Endothelial cell of umbilical vein (primary cell): ENCODE measurements at regions of chr3 and their contacts with region 1.

Region 1: DNA sequence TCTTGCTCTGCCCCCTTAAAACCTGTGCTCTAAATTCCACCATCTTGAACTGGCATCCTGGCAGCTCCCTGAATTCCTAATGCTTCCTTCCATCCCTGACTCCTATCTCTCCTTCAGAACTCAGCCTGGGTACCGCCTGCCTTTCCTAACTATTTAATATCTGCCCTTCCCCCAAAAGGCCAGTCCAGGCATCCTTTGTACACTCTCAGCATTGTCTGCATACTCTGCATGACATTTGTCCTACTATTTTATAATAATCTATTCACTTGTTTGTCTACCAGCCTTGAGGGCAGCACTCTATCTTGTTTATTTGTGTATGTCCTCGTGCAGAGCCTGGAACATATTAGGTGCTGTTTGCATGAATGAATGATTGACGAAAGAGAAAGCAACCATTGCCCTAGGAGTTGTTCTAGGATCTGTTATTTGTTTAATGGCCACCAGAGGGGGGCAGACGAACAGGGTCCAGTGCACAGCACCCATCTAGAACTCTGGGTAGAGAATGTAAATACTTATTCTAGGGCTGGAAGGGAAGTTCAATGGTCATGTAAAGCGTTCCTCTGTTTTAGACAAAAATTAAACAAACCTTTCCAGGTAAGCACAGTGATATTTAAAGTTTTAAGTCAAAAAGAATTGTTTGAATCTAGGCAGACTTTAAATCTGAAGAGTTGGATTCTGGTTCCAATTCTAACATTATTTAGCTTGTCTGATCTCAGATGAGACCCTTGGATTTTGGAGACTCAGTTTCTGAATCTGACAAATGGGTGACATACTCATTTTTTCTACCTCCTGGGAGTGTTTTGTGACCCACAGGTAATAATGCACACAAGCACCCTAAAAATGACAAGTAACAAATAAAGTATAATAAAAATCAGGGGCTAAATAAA is 125.8 kb upstream of the GALNT15 start:
- DNase-seq: peak; percentile 75
- H3K4me3 ChIP-seq: peak overlapping the region in 1 of 3 experiments; percentile 35
- H3K27ac ChIP-seq: no peak overlapping the region
- H3K4me1 ChIP-seq: peaks cover 18% of the 10 kb centered on the region
- H3K27me3 ChIP-seq: no peaks in the 10 kb centered on the region
- CTCF ChIP-seq: peak; percentile 60 to 67
- POLR2A ChIP-seq: no peak

Region 2: GRCh38 chr3:15205934-15206661 is 842.6 kb before region 1 on chr3 and contains the start of gene CAPN7:
- CTCF ChIA-PET with region 1: no interaction called
- POLR2A ChIA-PET with region 1: no interaction called
- dilution Hi-C with region 1: no loop called
- intact Hi-C with region 1: loop called (anchors 5 kb)
- DNase-seq: peak; percentile 98
- H3K4me3 ChIP-seq: peak within 1 kb of the TSS; percentile 69 to 94 (median 87)
- H3K27ac ChIP-seq: peak within 1 kb of the TSS; percentile 66
- H3K4me1 ChIP-seq: peaks cover 6% of the 10 kb centered on the region
- H3K27me3 ChIP-seq: no peaks in the 10 kb centered on the region
- CTCF ChIP-seq: peak; percentile 31 to 50
- POLR2A ChIP-seq: peak; percentile 86
- total RNA-seq, gene CAPN7: 28.8 and 32.7 TPM in 2 replicates

Region 3: DNA sequence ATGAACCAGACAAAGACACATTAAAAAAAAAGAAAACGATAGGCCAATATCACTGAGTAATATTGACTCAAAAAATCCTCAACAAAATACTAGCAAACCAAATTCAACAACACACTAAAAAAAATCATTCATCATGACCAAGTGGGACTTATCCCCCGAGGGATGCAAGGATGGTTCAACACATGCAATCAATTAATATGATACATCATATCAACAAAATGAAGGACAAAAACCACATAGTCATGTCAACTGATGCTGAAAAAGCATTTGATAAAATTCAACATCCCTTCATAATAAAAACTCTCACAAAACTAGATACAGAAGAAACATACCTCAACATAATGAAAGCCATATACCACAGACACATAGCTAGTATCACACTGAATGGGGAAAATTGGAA is 209.1 kb before region 1 on chr3:
- CTCF ChIA-PET with region 1: no interaction called
- POLR2A ChIA-PET with region 1: no interaction called
- dilution Hi-C with region 1: no loop called
- intact Hi-C with region 1: no loop called
- DNase-seq: no peak
- H3K4me3 ChIP-seq: no peak overlapping the region
- H3K27ac ChIP-seq: no peak overlapping the region
- H3K4me1 ChIP-seq: no peaks in the 10 kb centered on the region
- H3K27me3 ChIP-seq: no peaks in the 10 kb centered on the region
- CTCF ChIP-seq: no peak
- POLR2A ChIP-seq: no peak

Region 4: GRCh38 chr3:16060358-16060852 is 11.7 kb after region 1 on chr3:
- CTCF ChIA-PET with region 1: interaction called, 90 read pairs
- POLR2A ChIA-PET with region 1: interaction called, 10 read pairs
- dilution Hi-C with region 1: no loop called
- intact Hi-C with region 1: loop called (anchors 1 kb)
- DNase-seq: peak; percentile 82
- H3K4me3 ChIP-seq: no peak overlapping the region
- H3K27ac ChIP-seq: peak overlapping the region; percentile 97
- H3K4me1 ChIP-seq: peaks cover 57% of the 10 kb centered on the region
- H3K27me3 ChIP-seq: no peaks in the 10 kb centered on the region
- CTCF ChIP-seq: peak; percentile 4 to 45
- POLR2A ChIP-seq: peak; percentile 35

Region 5: DNA sequence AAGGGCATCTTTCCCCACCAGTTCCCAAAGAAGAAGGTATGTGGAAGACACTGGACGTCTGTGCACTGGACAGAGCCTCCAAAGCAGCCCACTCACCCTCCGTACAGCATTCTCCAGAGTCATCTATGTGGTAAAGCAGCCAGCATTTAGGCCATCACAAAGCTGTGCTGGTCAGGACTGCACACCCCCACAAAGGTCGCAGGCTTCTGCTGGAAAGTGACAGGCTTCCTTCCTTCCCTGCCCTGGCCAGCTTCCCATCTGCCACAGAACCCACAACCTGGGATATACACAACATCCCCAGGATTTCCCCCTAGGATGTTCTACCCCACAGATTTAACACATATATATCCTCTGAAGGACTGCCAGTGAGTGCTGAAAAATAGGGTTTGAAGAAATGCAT is 61.3 kb after region 1 on chr3:
- CTCF ChIA-PET with region 1: interaction called, 5 read pairs
- POLR2A ChIA-PET with region 1: no interaction called
- dilution Hi-C with region 1: no loop called
- intact Hi-C with region 1: loop called (anchors 1 kb)
- DNase-seq: peak; percentile 50
- H3K4me3 ChIP-seq: no peak overlapping the region
- H3K27ac ChIP-seq: no peak overlapping the region
- H3K4me1 ChIP-seq: peaks cover 12% of the 10 kb centered on the region
- H3K27me3 ChIP-seq: no peaks in the 10 kb centered on the region
- CTCF ChIP-seq: no peak
- POLR2A ChIP-seq: no peak

Region 6: DNA sequence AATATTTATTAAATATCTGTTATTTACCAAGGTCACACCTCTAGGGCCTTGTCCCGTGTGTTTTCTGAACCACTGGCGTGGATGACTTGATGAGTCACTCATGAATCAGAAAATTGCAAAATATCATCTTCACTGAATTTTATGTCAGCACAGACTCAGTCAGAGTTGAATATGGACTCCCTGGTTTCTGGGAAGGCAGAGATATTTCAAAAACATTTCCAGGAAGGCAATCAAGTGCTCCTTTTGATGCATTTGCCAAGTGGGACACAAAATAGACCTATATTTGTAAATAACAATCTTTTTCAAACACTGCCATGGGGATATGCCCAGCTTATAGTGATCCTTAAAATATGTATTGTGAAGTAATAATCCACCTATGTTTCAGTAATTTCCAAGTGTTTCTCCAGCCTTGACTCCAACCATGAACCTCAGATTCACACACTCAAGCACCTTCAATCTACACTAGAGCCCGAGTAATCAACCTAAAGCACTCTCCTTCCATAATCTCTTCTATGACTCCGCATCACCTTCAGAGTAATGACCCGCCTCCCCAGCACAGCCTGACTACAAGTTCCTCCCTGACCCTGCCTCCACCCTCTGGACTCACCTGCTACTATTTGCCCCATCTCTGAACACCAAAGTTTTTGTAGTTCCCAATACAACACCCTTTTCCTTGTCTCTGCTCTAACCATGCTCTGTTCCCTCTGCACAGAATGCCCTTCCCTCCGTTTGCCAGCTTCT is 191.8 kb after region 1 on chr3:
- CTCF ChIA-PET with region 1: interaction called, 30 read pairs
- POLR2A ChIA-PET with region 1: no interaction called
- dilution Hi-C with region 1: no loop called
- intact Hi-C with region 1: no loop called
- DNase-seq: no peak
- H3K4me3 ChIP-seq: no peak overlapping the region
- H3K27ac ChIP-seq: no peak overlapping the region
- H3K4me1 ChIP-seq: peaks cover 11% of the 10 kb centered on the region
- H3K27me3 ChIP-seq: no peaks in the 10 kb centered on the region
- CTCF ChIP-seq: no peak
- POLR2A ChIP-seq: no peak

Region 7: GRCh38 chr3:16550676-16551341 is 502.1 kb after region 1 on chr3:
- CTCF ChIA-PET with region 1: no interaction called
- POLR2A ChIA-PET with region 1: no interaction called
- dilution Hi-C with region 1: no loop called
- intact Hi-C with region 1: loop called (anchors 5 kb)
- DNase-seq: peak; percentile 87
- H3K4me3 ChIP-seq: no peak overlapping the region
- H3K27ac ChIP-seq: no peak overlapping the region
- H3K4me1 ChIP-seq: peaks cover 6% of the 10 kb centered on the region
- H3K27me3 ChIP-seq: peaks cover 3 to 4% of the 10 kb centered on the region in 2 experiments
- CTCF ChIP-seq: peak; percentile 72 to 88
- POLR2A ChIP-seq: no peak